ENCODE measurements at regions of chr5 and their contacts with region 1.

Region 1: GRCh38 chr5:140351609-140352334 is 5.4 kb upstream of the HBEGF start:
- DNase-seq: peak; percentile 79
- H3K4me3 ChIP-seq: no peak overlapping the region
- H3K27ac ChIP-seq: no peak overlapping the region
- H3K4me1 ChIP-seq: peaks cover 16% of the 10 kb centered on the region
- H3K27me3 ChIP-seq: no peaks in the 10 kb centered on the region
- CTCF ChIP-seq: peak; percentile 70 to 71
- POLR2A ChIP-seq: no peak

Region 2: GRCh38 chr5:140235791-140236551 is 115.8 kb before region 1 on chr5:
- CTCF ChIA-PET with region 1: interaction called, 1,214 read pairs
- POLR2A ChIA-PET with region 1: interaction called, 112 read pairs
- dilution Hi-C with region 1: no loop called
- intact Hi-C with region 1: no loop called
- DNase-seq: no peak
- H3K4me3 ChIP-seq: no peak overlapping the region
- H3K27ac ChIP-seq: no peak overlapping the region
- H3K4me1 ChIP-seq: peaks cover 4% of the 10 kb centered on the region
- H3K27me3 ChIP-seq: no peaks in the 10 kb centered on the region
- CTCF ChIP-seq: no peak
- POLR2A ChIP-seq: no peak

Region 3: DNA sequence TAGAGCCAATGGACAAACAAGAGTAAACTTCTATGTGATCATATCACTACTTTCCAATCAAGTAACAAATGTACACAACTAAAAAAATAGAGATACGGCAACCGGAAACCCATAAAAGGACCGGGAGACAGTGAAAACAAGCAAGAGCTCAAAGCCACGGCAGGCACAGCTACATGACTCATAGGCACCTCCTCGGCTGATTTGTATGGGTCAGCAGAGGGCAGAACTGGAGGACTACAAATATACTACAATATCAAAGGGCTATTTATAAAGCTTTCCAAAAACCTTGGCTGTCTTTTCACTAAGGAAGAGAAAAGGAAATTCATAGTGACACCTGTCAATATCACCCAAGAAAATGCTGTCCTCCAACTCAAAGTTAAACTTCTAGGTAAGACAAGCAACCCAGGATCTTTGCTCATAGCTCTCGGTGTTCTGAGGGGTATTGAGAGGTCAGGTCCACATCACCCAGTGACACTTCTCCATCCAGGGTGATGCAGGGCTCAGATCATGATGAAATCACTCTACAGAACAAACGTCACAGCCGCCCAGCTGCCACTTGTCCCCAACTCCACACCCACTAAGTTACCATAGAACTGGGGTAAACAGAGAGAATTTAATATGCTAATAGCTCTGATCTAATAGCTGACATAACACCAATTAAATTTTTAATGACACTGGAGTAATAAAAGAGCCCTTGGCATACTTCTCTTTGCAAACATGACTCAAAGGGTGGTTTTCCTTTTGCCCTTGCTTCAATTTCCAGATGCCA is 90.2 kb before region 1 on chr5:
- CTCF ChIA-PET with region 1: interaction called, 58 read pairs
- POLR2A ChIA-PET with region 1: interaction called, 18 read pairs
- dilution Hi-C with region 1: no loop called
- intact Hi-C with region 1: no loop called
- DNase-seq: peak; percentile 97
- H3K4me3 ChIP-seq: peak overlapping the region in 1 of 3 experiments; percentile 23
- H3K27ac ChIP-seq: peak overlapping the region; percentile 84
- H3K4me1 ChIP-seq: peaks cover 30% of the 10 kb centered on the region
- H3K27me3 ChIP-seq: no peaks in the 10 kb centered on the region
- CTCF ChIP-seq: no peak
- POLR2A ChIP-seq: peak; percentile 53

Region 4: GRCh38 chr5:140329739-140330481 is 21.9 kb before region 1 on chr5:
- CTCF ChIA-PET with region 1: interaction called, 43 read pairs
- POLR2A ChIA-PET with region 1: interaction called, 24 read pairs
- dilution Hi-C with region 1: no loop called
- intact Hi-C with region 1: no loop called
- DNase-seq: peak; percentile 94
- H3K4me3 ChIP-seq: no peak overlapping the region
- H3K27ac ChIP-seq: peak overlapping the region; percentile 61
- H3K4me1 ChIP-seq: peaks cover 30% of the 10 kb centered on the region
- H3K27me3 ChIP-seq: no peaks in the 10 kb centered on the region
- CTCF ChIP-seq: no peak
- POLR2A ChIP-seq: no peak

Region 5: GRCh38 chr5:140362860-140363630 is 11.3 kb after region 1 on chr5:
- CTCF ChIA-PET with region 1: interaction called, 19 read pairs
- POLR2A ChIA-PET with region 1: interaction called, 3 read pairs
- dilution Hi-C with region 1: no loop called
- intact Hi-C with region 1: no loop called
- DNase-seq: peak; percentile 61
- H3K4me3 ChIP-seq: peak overlapping the region in 2 of 3 experiments; percentile 20 to 24
- H3K27ac ChIP-seq: no peak overlapping the region
- H3K4me1 ChIP-seq: peaks cover 3% of the 10 kb centered on the region
- H3K27me3 ChIP-seq: no peaks in the 10 kb centered on the region
- CTCF ChIP-seq: peak; percentile 97 to 98
- POLR2A ChIP-seq: no peak

Measured in endothelial cell of umbilical vein (primary cell).